ENCODE measurements at regions of chr19 and their contacts with region 1.

Region 1: GRCh38 chr19:8412783-8413628 is at the start of gene MARCHF2:
- DNase-seq: peak; percentile 91 to 97
- H3K4me3 ChIP-seq: peak within 1 kb of the TSS; percentile 80
- H3K27ac ChIP-seq: no peak within 1 kb of the TSS
- H3K4me1 ChIP-seq: peaks cover 5% of the 10 kb centered on the region
- H3K27me3 ChIP-seq: no peaks in the 10 kb centered on the region
- CTCF ChIP-seq: peak; percentile 76
- total RNA-seq, gene MARCHF2: 16.6 and 25.2 TPM in 2 replicates

Region 2: GRCh38 chr19:8087876-8088275 is 325.1 kb before region 1 on chr19:
- CTCF ChIA-PET with region 1: interaction called, 14 read pairs
- POLR2A ChIA-PET with region 1: no interaction called
- intact Hi-C with region 1: no loop called
- DNase-seq: no peak
- H3K4me3 ChIP-seq: no peak overlapping the region
- H3K27ac ChIP-seq: no peak overlapping the region
- H3K4me1 ChIP-seq: peaks cover 5% of the 10 kb centered on the region; the same call in 1 of the 2 replicates
- H3K27me3 ChIP-seq: peaks cover 19% of the 10 kb centered on the region; the same call in 1 of the 2 replicates
- CTCF ChIP-seq: no peak

Region 3: DNA sequence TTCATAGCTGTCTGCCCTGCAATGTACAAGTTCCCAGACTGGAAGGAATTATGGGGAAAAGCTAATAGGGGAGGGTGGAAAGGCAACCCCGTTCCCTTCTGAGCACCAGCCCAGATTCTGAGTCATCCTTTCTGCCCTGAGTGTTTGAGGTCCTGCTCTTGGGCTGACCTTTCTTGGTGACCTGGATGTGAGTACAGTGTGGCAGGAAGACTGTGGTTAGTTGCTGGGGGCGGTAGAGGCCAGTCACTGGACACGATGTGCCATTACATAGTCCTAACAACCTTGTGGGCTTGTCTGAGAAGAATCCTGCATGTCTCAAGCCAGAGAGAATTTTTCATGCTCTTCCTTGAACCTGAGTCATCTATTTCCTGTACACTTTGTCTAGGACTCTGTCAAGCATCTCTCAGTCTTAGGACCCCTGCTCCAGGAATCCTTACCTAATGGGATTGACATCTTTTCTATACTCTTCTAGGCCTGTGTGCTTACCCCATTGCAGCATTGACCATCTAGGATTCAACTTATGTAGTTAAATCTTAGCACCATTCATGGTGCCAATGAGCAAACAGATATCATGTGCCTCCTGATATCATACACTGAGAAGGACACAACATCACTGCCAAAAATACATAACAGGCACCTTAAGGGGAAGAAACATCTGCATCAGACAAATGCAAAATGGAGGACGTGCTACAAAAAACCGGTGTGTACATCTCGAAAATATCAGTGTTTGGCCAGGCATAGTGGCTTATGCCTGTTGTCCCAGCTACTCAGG is 57.2 kb before region 1 on chr19:
- CTCF ChIA-PET with region 1: interaction called, 3 read pairs
- POLR2A ChIA-PET with region 1: interaction called, 3 read pairs
- intact Hi-C with region 1: loop called (anchors 2 kb)
- DNase-seq: peak; percentile 70 to 98
- H3K4me3 ChIP-seq: no peak overlapping the region
- H3K27ac ChIP-seq: peak overlapping the region; percentile 59
- H3K4me1 ChIP-seq: peaks cover 48% of the 10 kb centered on the region
- H3K27me3 ChIP-seq: no peaks in the 10 kb centered on the region
- CTCF ChIP-seq: 0 out of 2 replicates have a peak, but pooled peaks have one; percentile 14

Region 4: GRCh38 chr19:8423817-8424223 is 10.8 kb after region 1 on chr19:
- CTCF ChIA-PET with region 1: interaction called, 31 read pairs
- POLR2A ChIA-PET with region 1: interaction called, 14 read pairs
- intact Hi-C with region 1: no loop called
- DNase-seq: peak; percentile 91 to 98
- H3K4me3 ChIP-seq: peak overlapping the region; percentile 27; the same call in 1 of the 2 replicates
- H3K27ac ChIP-seq: peak overlapping the region; percentile 64
- H3K4me1 ChIP-seq: peaks cover 19% of the 10 kb centered on the region
- H3K27me3 ChIP-seq: no peaks in the 10 kb centered on the region
- CTCF ChIP-seq: no peak

Region 5: DNA sequence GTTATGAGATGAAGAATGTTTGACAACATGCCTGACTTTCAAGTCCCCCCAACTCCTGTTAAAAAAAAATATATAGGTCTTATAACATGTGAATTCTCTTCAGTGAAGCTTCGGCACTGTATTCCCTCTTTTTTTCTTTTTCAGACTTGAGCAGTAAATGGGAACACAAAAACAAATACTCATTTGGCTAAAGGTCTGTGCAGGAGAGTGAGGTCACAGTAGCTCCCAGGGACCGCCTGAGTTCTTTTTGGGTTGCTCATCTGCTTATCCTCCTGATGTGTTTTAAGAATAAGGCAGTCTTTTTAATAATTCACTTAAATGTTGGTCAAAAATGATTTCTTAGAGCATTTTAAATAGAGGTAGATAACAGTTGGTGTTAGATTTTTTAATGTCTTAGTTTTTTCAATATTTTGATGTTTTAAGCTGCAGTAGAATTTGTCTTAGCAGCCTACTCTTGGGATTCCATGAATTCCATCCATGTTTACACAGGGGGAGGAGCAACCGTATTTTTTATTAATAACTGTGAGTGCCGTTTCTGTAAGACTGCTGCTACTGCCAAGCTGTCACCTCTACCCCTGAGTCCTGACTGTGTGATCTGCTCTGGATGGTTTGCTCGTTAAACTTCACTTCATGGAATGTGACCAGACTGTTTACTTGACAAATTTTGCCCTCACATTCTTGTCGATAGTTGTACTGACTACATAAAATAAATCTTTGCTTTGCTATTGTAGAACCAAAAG is 46.7 kb after region 1 on chr19:
- CTCF ChIA-PET with region 1: interaction called, 4 read pairs
- POLR2A ChIA-PET with region 1: no interaction called
- intact Hi-C with region 1: loop called (anchors 5 kb)
- DNase-seq: peak; percentile 27 to 88
- H3K4me3 ChIP-seq: no peak overlapping the region
- H3K27ac ChIP-seq: peak overlapping the region; percentile 43
- H3K4me1 ChIP-seq: peaks cover 35% of the 10 kb centered on the region
- H3K27me3 ChIP-seq: no peaks in the 10 kb centered on the region
- CTCF ChIP-seq: no peak

Region 6: GRCh38 chr19:8487137-8487851 is 74.3 kb after region 1 on chr19:
- CTCF ChIA-PET with region 1: interaction called, 7 read pairs
- POLR2A ChIA-PET with region 1: no interaction called
- intact Hi-C with region 1: loop called (anchors 10 kb)
- DNase-seq: no peak
- H3K4me3 ChIP-seq: no peak overlapping the region
- H3K27ac ChIP-seq: no peak overlapping the region
- H3K4me1 ChIP-seq: no peaks in the 10 kb centered on the region
- H3K27me3 ChIP-seq: no peaks in the 10 kb centered on the region
- CTCF ChIP-seq: no peak

Region 7: DNA sequence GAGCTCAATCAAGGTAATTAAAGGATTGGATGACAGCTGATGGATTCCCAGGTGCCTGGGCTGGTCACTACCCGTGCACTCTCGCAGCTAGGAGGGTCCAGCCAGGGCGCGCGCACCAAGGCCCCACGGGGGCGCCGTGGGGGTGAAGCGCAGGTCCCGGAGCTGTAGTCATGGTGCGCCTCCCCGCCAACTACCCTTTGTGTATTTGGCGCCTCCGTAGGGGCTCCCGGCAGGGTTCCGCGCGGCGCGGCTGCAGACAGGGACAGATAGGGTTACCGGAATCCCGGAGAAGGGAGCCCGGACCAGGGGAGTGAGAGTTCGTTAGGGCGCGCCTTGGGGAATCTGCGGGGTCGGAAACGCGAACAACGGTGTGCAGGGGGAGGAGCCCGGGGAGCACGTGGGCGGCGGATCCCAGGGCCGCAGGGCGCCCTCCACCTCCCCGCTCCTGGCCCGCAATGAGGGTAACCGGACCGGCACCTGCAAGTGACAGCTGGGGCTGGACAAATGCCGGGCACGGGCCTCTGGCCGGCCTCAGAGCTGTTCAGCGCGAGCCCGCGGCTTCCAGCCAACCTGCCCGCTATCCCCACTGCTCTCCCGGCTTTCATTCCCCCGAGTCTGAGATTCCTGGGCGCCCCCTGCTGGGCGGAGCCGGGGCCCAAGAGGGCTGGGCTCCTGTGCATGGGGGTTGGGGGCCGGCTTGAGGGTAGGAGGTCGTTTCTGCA is 92.8 kb after region 1 on chr19:
- CTCF ChIA-PET with region 1: no interaction called
- POLR2A ChIA-PET with region 1: no interaction called
- intact Hi-C with region 1: loop called (anchors 2 kb)
- DNase-seq: peak in 1 of 2 experiments; percentile 72
- H3K4me3 ChIP-seq: peak overlapping the region; percentile 73
- H3K27ac ChIP-seq: no peak overlapping the region
- H3K4me1 ChIP-seq: no peaks in the 10 kb centered on the region
- H3K27me3 ChIP-seq: no peaks in the 10 kb centered on the region
- CTCF ChIP-seq: peak; percentile 94

Region 8: DNA sequence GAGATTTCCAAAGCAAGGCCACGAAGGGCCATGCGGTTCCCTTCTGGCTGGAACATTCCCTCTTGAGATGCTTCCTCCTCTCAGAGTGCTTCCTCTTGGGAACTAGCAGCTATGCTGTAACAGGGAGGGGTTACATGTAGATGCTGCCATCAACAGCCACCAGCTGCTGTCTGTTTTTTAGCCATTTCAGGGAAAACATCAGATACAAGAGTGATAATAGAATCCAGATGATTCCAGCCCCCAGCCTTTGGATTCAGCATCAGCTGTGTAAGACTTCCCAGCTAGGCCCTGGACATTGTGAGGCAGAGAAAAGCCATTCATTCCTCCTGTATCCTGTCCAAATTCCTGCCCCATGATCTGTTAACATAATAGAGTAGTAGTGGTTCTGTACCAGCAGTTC is 941.6 kb after region 1 on chr19:
- CTCF ChIA-PET with region 1: no interaction called
- POLR2A ChIA-PET with region 1: no interaction called
- intact Hi-C with region 1: no loop called
- DNase-seq: no peak
- H3K4me3 ChIP-seq: no peak overlapping the region
- H3K27ac ChIP-seq: no peak overlapping the region
- H3K4me1 ChIP-seq: no peaks in the 10 kb centered on the region
- H3K27me3 ChIP-seq: no peaks in the 10 kb centered on the region
- CTCF ChIP-seq: no peak

Measured in PC-9 (cell line).